HEK293 (cell line): ENCODE measurements at regions of chr18 and their contacts with region 1.

Region 1: GRCh38 chr18:76398896-76399612 is 96.0 kb downstream of the ZNF516 start:
- H3K4me3 ChIP-seq: no peak overlapping the region
- H3K27ac ChIP-seq: no peak overlapping the region
- H3K4me1 ChIP-seq: peaks cover 4% of the 10 kb centered on the region; the same call in 1 of the 2 replicates
- CTCF ChIP-seq: peak; percentile 81

Region 2: GRCh38 chr18:76328140-76328539 is 70.9 kb before region 1 on chr18:
- CTCF ChIA-PET with region 1: no interaction called
- POLR2A ChIA-PET with region 1: no interaction called
- H3K4me3 ChIP-seq: no peak overlapping the region
- H3K27ac ChIP-seq: no peak overlapping the region
- H3K4me1 ChIP-seq: no peaks in the 10 kb centered on the region
- CTCF ChIP-seq: no peak

Region 3: GRCh38 chr18:76354348-76354747 is 44.7 kb before region 1 on chr18:
- CTCF ChIA-PET with region 1: no interaction called
- POLR2A ChIA-PET with region 1: no interaction called
- H3K4me3 ChIP-seq: no peak overlapping the region
- H3K27ac ChIP-seq: no peak overlapping the region
- H3K4me1 ChIP-seq: 0 out of 2 replicates have a peak, but pooled peaks cover 2% of the 10 kb centered on the region
- CTCF ChIP-seq: no peak

Region 4: GRCh38 chr18:76410660-76411417 is 11.8 kb after region 1 on chr18:
- CTCF ChIA-PET with region 1: interaction called, 33 read pairs
- POLR2A ChIA-PET with region 1: no interaction called
- H3K4me3 ChIP-seq: no peak overlapping the region
- H3K27ac ChIP-seq: no peak overlapping the region
- H3K4me1 ChIP-seq: no peaks in the 10 kb centered on the region
- CTCF ChIP-seq: no peak

Region 5: DNA sequence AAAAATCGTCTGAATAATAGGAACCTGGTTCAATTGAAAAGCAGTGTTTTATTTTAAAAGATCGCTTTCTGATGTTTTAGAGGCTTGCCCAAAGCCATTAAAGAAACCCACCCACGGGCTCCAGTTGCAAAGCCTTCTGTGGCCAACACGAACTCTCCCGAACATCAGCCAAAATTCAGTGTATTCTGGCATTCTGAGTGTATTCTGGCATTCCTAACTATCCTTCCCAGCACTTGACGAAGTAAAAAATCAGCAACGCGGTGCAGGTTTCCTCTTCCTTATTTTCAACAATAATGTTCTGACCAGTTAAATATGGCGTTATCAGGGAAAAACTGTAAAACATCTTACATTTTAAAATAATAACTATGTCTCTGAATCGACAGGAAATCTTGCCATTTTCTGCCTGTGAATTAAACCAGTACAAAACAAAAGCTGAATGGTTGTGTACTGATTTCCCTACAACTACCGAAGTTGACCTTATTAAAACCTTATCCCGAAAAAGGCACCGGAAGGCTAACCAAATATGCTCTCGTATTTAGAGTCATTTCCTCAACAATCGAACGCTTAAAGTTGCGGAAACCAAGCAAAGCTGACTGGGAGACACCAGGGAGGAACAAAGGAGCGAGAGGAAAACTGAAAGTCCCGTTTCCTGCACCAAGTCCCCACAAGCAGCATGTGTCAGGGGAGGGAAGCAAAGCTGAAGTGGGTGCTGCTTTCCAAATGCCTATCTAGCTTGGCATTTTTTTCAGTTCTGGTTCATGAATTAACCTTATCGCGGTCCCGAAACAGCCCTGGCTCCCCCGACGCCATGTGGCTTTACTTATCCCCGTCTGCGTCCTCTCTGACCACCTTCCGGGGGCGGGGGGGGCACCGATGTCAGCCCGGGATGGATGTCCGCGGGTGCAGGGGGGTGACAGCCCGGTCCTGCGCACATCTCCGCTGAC is 51.7 kb after region 1 on chr18:
- CTCF ChIA-PET with region 1: interaction called, 13 read pairs
- POLR2A ChIA-PET with region 1: no interaction called
- H3K4me3 ChIP-seq: peak overlapping the region; percentile 6
- H3K27ac ChIP-seq: peak overlapping the region; percentile 53; the same call in 1 of the 2 replicates
- H3K4me1 ChIP-seq: peaks cover 47% of the 10 kb centered on the region
- CTCF ChIP-seq: no peak

Region 6: GRCh38 chr18:76658627-76659026 is 259.6 kb after region 1 on chr18:
- CTCF ChIA-PET with region 1: interaction called, 25 read pairs
- POLR2A ChIA-PET with region 1: no interaction called
- H3K4me3 ChIP-seq: no peak overlapping the region
- H3K27ac ChIP-seq: no peak overlapping the region
- H3K4me1 ChIP-seq: peaks cover 5% of the 10 kb centered on the region; the same call in 1 of the 2 replicates
- CTCF ChIP-seq: peak; percentile 31; the same call in 1 of the 2 replicates

Region 7: DNA sequence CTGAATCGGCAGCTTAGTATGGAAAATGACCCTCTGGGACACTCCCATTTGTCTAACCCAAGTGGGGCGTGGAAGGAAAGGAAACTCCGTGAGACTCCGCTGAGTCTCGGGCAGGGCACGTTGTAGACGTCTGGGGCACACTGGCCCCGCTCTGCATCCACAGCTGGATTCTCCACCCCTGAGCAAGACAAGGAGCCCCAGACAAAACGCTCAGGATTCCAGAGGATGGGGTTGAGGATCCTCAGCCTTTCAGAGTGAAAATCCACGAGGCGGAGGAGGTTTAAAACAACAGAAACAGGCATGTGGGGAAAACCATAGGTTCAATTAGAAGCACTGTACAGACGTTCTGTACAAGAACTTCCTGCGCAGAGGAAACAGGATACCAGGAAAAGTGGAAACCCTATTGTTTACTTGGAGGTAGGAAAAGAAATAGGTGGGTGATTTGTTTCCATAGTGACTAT is 298.4 kb after region 1 on chr18:
- CTCF ChIA-PET with region 1: interaction called, 11 read pairs
- POLR2A ChIA-PET with region 1: no interaction called
- H3K4me3 ChIP-seq: no peak overlapping the region
- H3K27ac ChIP-seq: no peak overlapping the region
- H3K4me1 ChIP-seq: no peaks in the 10 kb centered on the region
- CTCF ChIP-seq: no peak

Region 8: DNA sequence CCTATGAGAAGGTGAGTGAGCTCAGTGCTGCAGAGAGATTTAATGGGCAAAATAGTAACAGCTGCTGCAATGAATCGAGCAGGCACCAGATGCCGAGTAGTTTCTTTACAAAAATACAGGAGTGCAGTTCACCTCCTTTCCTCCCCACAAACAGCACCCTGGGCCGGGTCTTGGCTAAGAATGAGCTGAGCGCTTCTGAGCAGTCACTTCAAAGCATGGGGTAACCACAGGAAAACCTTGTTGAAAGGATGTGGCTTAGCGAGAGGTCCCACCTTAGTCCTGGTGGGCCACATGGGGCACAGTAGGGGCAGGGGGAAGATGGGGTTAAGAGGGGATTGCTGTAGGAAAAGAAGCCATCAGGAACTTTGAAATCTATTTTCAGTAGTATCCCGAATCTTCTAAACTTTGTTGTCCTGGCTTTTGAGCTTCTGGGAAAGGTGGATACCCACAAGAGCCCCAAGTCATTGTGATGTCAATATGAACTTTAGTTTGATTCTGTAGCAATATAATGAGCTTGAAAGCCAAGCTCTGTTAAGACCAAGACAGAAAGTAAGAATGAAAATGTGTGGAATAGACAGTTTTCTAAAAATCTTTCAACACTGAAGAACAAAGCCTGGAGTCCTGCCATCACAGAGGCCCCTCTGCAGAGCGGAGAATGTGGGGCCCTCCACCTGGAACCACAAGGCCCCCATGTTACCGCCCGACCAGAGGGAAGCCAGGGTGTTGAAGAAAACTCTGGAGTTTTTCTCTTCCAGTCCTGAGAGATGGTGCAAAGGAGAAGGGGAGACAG is 322.3 kb after region 1 on chr18:
- CTCF ChIA-PET with region 1: interaction called, 14 read pairs
- POLR2A ChIA-PET with region 1: no interaction called
- H3K4me3 ChIP-seq: no peak overlapping the region
- H3K27ac ChIP-seq: no peak overlapping the region
- H3K4me1 ChIP-seq: no peaks in the 10 kb centered on the region
- CTCF ChIP-seq: no peak